Adrenal gland (tissue), 19 donors: ENCODE measurements at regions of chr19 and their contacts with region 1.

Region 1: DNA sequence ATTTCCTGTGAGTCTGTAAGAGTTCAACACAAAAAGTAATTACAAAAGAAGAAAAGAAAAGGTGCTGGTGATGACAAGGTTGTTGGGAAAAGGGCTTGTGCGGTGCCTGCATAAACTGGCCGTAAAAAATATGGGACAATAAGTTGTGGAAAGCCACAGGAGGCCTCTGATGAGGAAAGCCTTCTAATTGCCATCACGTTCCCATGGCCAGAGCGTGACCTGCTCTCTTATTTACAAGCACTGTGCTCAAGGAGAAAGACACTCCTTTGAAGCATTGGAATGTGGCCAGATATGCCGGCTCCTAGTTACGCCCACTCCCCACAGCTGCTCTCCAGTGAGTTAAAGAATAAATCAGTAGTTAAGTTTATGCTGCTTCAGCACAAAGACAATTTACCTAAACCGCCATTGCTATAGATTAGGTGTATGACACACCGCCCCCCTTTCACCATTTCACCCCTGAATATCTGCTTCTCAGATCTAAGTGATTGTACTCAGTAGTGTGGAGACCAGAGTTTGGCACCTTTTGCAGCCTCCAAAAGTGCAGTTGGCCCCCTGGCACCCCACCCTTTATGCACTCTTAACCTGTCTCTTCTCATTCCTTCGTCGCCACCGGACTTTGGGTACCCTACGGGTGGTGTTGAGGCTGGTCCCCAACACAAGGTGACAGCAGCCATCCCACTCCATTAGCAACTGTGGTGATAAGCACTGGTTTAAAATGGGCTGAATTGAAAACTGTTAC is 8.1 kb upstream of the PGLYRP1 start:
- DNase-seq: no peak
- H3K4me3 ChIP-seq: no peak overlapping the region
- H3K27ac ChIP-seq: no peak overlapping the region
- H3K4me1 ChIP-seq: no peaks in the 10 kb centered on the region
- H3K27me3 ChIP-seq: no peaks in the 10 kb centered on the region
- CTCF ChIP-seq: no peak
- POLR2A ChIP-seq: no peak

Region 2: GRCh38 chr19:46265217-46265828 is 234.3 kb after region 1 on chr19:
- intact Hi-C with region 1: loop called in 1 of 2 experiments (anchors 5 kb)
- DNase-seq: peak; percentile 66 to 86 (median 72)
- H3K4me3 ChIP-seq: no peak overlapping the region
- H3K27ac ChIP-seq: no peak overlapping the region
- H3K4me1 ChIP-seq: no peaks in the 10 kb centered on the region
- H3K27me3 ChIP-seq: peaks cover 13% of the 10 kb centered on the region
- CTCF ChIP-seq: peak; percentile 75 to 98 (median 94)
- POLR2A ChIP-seq: no peak